Ovary (tissue), 10 donors: ENCODE measurements at regions of chr3 and their contacts with region 1.

Region 1: DNA sequence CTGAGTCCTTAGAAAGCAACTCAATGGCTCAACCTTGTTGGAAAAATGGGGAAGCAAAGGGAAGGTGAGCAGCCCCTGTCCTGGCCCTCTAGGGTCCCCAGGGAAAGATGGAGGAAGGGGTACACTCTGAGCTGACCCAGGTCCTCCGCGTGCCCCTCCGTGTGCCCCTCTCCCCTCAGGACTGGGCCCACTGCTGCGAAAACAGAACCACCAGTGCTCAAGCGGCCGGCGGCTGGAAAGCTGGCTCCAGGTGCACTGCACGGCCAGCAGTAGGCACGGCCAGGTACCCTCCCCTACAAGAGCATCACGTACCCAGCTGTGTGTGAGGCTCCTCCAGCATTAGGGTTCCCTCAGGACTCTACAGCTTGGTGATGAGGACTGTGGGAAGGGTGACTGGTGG is 26.3 kb downstream of the RAB43 start:
- DNase-seq: no peak
- H3K4me3 ChIP-seq: no peak overlapping the region
- H3K27ac ChIP-seq: no peak overlapping the region
- H3K4me1 ChIP-seq: no peaks in the 10 kb centered on the region
- H3K27me3 ChIP-seq: no peaks in the 10 kb centered on the region
- CTCF ChIP-seq: no peak
- EP300 ChIP-seq: no peak
- POLR2A ChIP-seq: no peak

Region 2: DNA sequence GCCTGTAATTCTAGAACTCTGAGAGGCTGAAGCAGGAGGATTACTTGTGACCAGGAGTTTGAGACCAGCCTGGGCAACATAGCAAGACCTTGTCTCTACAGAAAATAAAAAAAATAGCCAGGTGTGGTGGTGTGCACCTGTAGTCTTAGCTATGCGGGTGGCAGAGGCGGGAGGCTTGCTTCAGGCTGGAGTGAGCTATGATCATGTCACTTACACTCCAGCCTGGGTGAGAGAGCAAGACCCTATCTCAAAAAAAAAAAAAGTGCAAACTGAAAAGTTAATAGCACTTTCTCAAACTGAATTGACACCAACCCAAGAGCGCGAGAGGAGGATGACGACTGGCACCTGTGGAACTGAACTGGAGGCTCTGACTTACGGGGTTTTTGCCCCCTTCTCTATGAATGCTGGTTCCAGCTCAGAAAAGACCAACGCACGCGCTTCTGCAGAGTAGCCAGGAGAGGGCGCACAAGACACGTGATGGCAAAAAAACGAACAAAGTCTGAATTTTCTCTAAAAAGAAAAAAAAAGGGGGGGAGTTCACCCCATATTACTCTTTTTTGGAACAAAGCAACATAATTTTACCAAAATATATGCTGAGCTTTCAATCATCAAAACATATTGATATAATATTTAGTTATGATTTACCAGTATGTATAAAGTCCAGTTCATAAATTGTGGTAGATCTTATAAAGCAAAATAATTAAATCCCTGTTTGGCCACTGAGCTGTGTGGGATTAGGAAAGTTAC is 125.1 kb before region 1 on chr3:
- intact Hi-C with region 1: loop called in 1 of 4 experiments (anchors 5 kb)
- DNase-seq: peak in 4 of 5 donors; percentile 57 to 66 (median 58)
- H3K4me3 ChIP-seq: no peak overlapping the region
- H3K27ac ChIP-seq: no peak overlapping the region
- H3K4me1 ChIP-seq: no peaks in the 10 kb centered on the region
- H3K27me3 ChIP-seq: no peaks in the 10 kb centered on the region
- CTCF ChIP-seq: peak; percentile 74 to 88 (median 78)
- EP300 ChIP-seq: no peak
- POLR2A ChIP-seq: no peak

Region 3: GRCh38 chr3:129961134-129961541 is 865.9 kb after region 1 on chr3:
- intact Hi-C with region 1: no loop called
- DNase-seq: no peak
- H3K4me3 ChIP-seq: no peak overlapping the region
- H3K27ac ChIP-seq: no peak overlapping the region
- H3K4me1 ChIP-seq: no peaks in the 10 kb centered on the region
- H3K27me3 ChIP-seq: no peaks in the 10 kb centered on the region
- CTCF ChIP-seq: no peak
- EP300 ChIP-seq: no peak
- POLR2A ChIP-seq: no peak